ENCODE measurements at regions of chr4 and their contacts with region 1.

Region 1: GRCh38 chr4:41281038-41281634 is 24.4 kb downstream of the UCHL1 start:
- DNase-seq: no peak
- H3K4me3 Mint-ChIP-seq: no peak overlapping the region
- H3K27ac Mint-ChIP-seq: no peak overlapping the region
- H3K4me1 Mint-ChIP-seq: no peaks in the 10 kb centered on the region
- H3K27me3 Mint-ChIP-seq: no peaks in the 10 kb centered on the region

Region 2: GRCh38 chr4:41346306-41347061 is 65.3 kb after region 1 on chr4:
- intact Hi-C with region 1: no loop called
- DNase-seq: no peak
- H3K4me3 Mint-ChIP-seq: no peak overlapping the region
- H3K27ac Mint-ChIP-seq: no peak overlapping the region
- H3K4me1 Mint-ChIP-seq: no peaks in the 10 kb centered on the region
- H3K27me3 Mint-ChIP-seq: no peaks in the 10 kb centered on the region

Region 3: GRCh38 chr4:41394362-41394960 is 113.3 kb after region 1 on chr4:
- intact Hi-C with region 1: no loop called
- DNase-seq: no peak
- H3K4me3 Mint-ChIP-seq: no peak overlapping the region
- H3K27ac Mint-ChIP-seq: no peak overlapping the region
- H3K4me1 Mint-ChIP-seq: no peaks in the 10 kb centered on the region
- H3K27me3 Mint-ChIP-seq: no peaks in the 10 kb centered on the region

Region 4: GRCh38 chr4:41644288-41644914 is 363.3 kb after region 1 on chr4:
- intact Hi-C with region 1: loop called (anchors 1 kb)
- DNase-seq: no peak
- H3K4me3 Mint-ChIP-seq: no peak overlapping the region
- H3K27ac Mint-ChIP-seq: no peak overlapping the region
- H3K4me1 Mint-ChIP-seq: no peaks in the 10 kb centered on the region
- H3K27me3 Mint-ChIP-seq: peaks cover 24% of the 10 kb centered on the region

Region 5: DNA sequence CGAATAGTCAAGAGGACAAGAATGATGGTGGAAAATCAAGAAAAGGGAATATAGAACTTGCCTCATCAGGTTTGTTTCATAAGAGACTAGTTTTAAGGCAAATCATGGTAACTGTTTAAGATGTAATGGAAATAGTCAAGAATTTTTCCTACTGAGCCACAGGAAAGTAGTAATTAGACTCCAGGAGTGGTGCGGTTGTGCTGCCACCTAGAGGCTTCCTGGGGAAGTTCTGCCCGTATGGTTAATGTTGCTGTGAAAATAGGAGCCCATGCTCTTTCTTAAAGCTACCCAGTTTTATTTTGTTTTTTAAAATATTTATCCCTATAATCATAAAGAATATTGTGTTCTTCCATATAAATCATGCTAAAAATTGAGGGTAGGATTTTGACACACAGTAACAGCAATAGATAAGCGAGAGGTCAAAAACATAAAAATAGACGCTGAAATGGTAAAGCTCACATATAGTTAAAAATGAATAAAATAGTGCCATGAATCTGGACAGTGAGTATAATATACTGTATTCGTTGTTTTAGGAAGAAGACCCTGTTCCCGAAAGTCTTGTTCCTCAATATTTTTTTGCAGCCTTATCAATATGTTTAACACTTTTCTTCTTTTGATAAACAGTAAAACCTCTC is 380.4 kb after region 1 on chr4:
- intact Hi-C with region 1: loop called (anchors 1 kb)
- DNase-seq: no peak
- H3K4me3 Mint-ChIP-seq: no peak overlapping the region
- H3K27ac Mint-ChIP-seq: no peak overlapping the region
- H3K4me1 Mint-ChIP-seq: no peaks in the 10 kb centered on the region
- H3K27me3 Mint-ChIP-seq: no peaks in the 10 kb centered on the region

Region 6: GRCh38 chr4:41692717-41693345 is 411.7 kb after region 1 on chr4:
- intact Hi-C with region 1: loop called (anchors 1 kb)
- DNase-seq: peak; percentile 11
- H3K4me3 Mint-ChIP-seq: no peak overlapping the region
- H3K27ac Mint-ChIP-seq: no peak overlapping the region
- H3K4me1 Mint-ChIP-seq: peaks cover 3% of the 10 kb centered on the region
- H3K27me3 Mint-ChIP-seq: peaks cover 6% of the 10 kb centered on the region

Region 7: GRCh38 chr4:41887821-41888686 is 606.9 kb after region 1 on chr4:
- intact Hi-C with region 1: loop called (anchors 2 kb)
- DNase-seq: no peak
- H3K4me3 Mint-ChIP-seq: no peak overlapping the region
- H3K27ac Mint-ChIP-seq: no peak overlapping the region
- H3K4me1 Mint-ChIP-seq: no peaks in the 10 kb centered on the region
- H3K27me3 Mint-ChIP-seq: peaks cover 33% of the 10 kb centered on the region

Measured in activated T-helper 2 cell treated with anti-CD3 and anti-CD28 coated beads, Interferon-gamma antibody, Interleukin-2, Interleukin-4, amounts not matched to agents 10 μg/mL and 5 μg/mL and 100 μg/mL, durations not matched to agents 14 hours and 24 hours and 36 hours (primary cell).